CD14-positive monocyte (primary cell): ENCODE measurements at regions of chr2 and their contacts with region 1.

Region 1: GRCh38 chr2:218852911-218853667 is 6.5 kb upstream of the WNT6 start:
- DNase-seq: peak; percentile 37 to 59 (median 49)
- H3K4me3 ChIP-seq: no peak overlapping the region
- H3K4me3 Mint-ChIP-seq: peak overlapping the region in 1 of 2 donors; percentile 75
- H3K27ac ChIP-seq: no peak overlapping the region
- H3K27ac Mint-ChIP-seq: no peak overlapping the region
- H3K4me1 ChIP-seq: peaks cover 11 to 12% of the 10 kb centered on the region in 2 donors
- H3K4me1 Mint-ChIP-seq: peaks cover 17% of the 10 kb centered on the region
- H3K27me3 ChIP-seq: peaks cover 35 to 52% of the 10 kb centered on the region in 2 donors
- H3K27me3 Mint-ChIP-seq: peaks cover 54 to 78% (median 76%) of the 10 kb centered on the region in 3 donors
- CTCF ChIP-seq: peak; percentile 83

Region 2: DNA sequence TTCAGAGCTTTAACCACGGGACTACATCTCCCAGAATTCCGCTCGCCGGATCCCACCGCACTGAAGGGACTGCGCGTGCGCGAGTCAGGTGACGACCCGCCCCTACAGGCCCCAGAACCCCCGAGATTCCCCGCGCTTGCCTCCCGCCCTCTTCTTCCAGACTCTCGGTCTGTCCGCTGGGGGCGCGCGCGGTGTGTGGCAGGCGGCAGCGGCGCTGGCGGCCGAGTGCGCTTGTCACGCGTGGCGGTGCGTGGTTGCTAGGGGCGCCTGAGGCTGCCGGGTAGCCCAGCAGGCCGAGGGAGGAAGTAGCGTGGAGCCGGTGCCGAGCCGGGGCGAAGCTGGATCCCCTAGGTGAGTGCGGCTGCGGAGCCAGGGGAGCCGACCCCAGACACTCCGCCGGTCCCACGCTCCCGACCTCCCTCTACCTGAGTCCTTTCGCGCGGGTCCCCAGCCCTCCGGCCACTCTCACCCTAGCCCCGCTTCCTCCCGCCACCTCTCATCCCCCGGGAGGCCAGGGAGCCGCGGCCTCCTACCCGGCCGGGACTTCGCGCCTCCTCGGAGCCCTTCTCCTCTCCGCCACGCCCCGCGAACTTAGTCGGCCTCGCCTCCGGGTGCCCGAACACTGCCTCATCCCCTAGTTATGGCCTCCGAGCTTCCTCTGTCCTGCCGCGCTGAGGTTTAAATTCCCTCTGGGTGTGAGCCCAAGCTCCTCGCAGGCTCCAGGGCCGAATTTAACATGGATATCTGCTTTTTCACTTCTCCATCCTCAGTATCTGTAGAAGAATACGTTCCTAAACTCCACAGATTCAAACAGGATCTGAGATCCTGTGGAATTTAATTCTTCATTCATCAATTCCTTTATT is 142.2 kb before region 1 on chr2 and contains the start of gene TTLL4:
- intact Hi-C with region 1: loop called (anchors 5 kb)
- DNase-seq: peak; percentile 97 to 99 (median 98)
- H3K4me3 ChIP-seq: peak within 1 kb of the TSS; percentile 66 to 87 (median 85)
- H3K4me3 Mint-ChIP-seq: peak within 1 kb of the TSS; percentile 89 to 93
- H3K27ac ChIP-seq: peak within 1 kb of the TSS; percentile 88 to 98
- H3K27ac Mint-ChIP-seq: peak within 1 kb of the TSS; percentile 93 to 98 (median 96)
- H3K4me1 ChIP-seq: peaks cover 53 to 55% of the 10 kb centered on the region in 2 donors
- H3K4me1 Mint-ChIP-seq: peaks cover 41% of the 10 kb centered on the region
- H3K27me3 ChIP-seq: no peaks in the 10 kb centered on the region
- H3K27me3 Mint-ChIP-seq: peaks cover 0 to 7% (median 4%) of the 10 kb centered on the region in 3 donors
- CTCF ChIP-seq: peak; percentile 90
- polyA plus RNA-seq, gene TTLL4: 13.5 to 90.2 (median 16.3) TPM

Region 3: GRCh38 chr2:218727502-218728165 is 125.5 kb before region 1 on chr2:
- intact Hi-C with region 1: loop called in 1 of 2 experiments (anchors 5 kb)
- DNase-seq: peak; percentile 44 to 67 (median 61)
- H3K4me3 ChIP-seq: no peak overlapping the region
- H3K4me3 Mint-ChIP-seq: no peak overlapping the region
- H3K27ac ChIP-seq: no peak overlapping the region
- H3K27ac Mint-ChIP-seq: peak overlapping the region in 6 of 7 donors; percentile 38 to 90 (median 74)
- H3K4me1 ChIP-seq: peaks cover 43 to 46% of the 10 kb centered on the region in 2 donors
- H3K4me1 Mint-ChIP-seq: peaks cover 49% of the 10 kb centered on the region
- H3K27me3 ChIP-seq: no peaks in the 10 kb centered on the region
- H3K27me3 Mint-ChIP-seq: no peaks in the 10 kb centered on the region
- CTCF ChIP-seq: peak; percentile 80

Region 4: GRCh38 chr2:218806346-218806978 is 46.6 kb before region 1 on chr2:
- intact Hi-C with region 1: no loop called
- DNase-seq: peak; percentile 67 to 80 (median 76)
- H3K4me3 ChIP-seq: peak overlapping the region in 1 of 3 experiments; percentile 51
- H3K4me3 Mint-ChIP-seq: peak overlapping the region; percentile 67 to 76
- H3K27ac ChIP-seq: peak overlapping the region; percentile 13 to 70
- H3K27ac Mint-ChIP-seq: peak overlapping the region; percentile 72 to 93 (median 86)
- H3K4me1 ChIP-seq: peaks cover 22 to 37% of the 10 kb centered on the region in 2 donors
- H3K4me1 Mint-ChIP-seq: peaks cover 34% of the 10 kb centered on the region
- H3K27me3 ChIP-seq: peaks cover 0 to 3% of the 10 kb centered on the region in 2 donors
- H3K27me3 Mint-ChIP-seq: peaks cover 4 to 6% (median 5%) of the 10 kb centered on the region in 3 donors
- CTCF ChIP-seq: no peak

Region 5: DNA sequence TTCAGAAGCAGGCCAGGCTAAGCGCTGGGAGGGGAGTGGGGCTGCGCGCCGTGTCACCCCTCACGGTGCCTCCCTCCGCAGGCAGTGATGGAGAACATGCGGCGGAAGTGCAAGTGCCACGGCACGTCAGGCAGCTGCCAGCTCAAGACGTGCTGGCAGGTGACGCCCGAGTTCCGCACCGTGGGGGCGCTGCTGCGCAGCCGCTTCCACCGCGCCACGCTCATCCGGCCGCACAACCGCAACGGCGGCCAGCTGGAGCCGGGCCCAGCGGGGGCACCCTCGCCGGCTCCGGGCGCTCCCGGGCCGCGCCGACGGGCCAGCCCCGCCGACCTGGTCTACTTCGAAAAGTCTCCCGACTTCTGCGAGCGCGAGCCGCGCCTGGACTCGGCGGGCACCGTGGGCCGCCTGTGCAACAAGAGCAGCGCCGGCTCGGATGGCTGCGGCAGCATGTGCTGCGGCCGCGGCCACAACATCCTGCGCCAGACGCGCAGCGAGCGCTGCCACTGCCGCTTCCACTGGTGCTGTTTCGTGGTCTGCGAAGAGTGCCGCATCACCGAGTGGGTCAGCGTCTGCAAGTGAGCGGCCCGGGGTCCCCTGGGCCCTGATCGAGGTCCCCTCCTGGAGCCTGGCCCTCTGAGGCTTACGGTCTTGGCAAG is 39.7 kb after region 1 on chr2:
- intact Hi-C with region 1: loop called (anchors 2 kb)
- DNase-seq: peak; percentile 64 to 83 (median 72)
- H3K4me3 ChIP-seq: peak overlapping the region in 1 of 3 experiments; percentile 56
- H3K4me3 Mint-ChIP-seq: peak overlapping the region; percentile 57 to 86
- H3K27ac ChIP-seq: no peak overlapping the region
- H3K27ac Mint-ChIP-seq: peak overlapping the region in 2 of 7 donors; percentile 41 to 52
- H3K4me1 ChIP-seq: peaks cover 9 to 29% of the 10 kb centered on the region in 2 donors
- H3K4me1 Mint-ChIP-seq: peaks cover 19% of the 10 kb centered on the region
- H3K27me3 ChIP-seq: peaks cover 47 to 69% of the 10 kb centered on the region in 2 donors
- H3K27me3 Mint-ChIP-seq: peaks cover 69 to 88% (median 69%) of the 10 kb centered on the region in 3 donors
- CTCF ChIP-seq: peak; percentile 70

Region 6: GRCh38 chr2:218898109-218898878 is 45.2 kb after region 1 on chr2:
- intact Hi-C with region 1: loop called (anchors 2 kb)
- DNase-seq: peak; percentile 49 to 68 (median 62)
- H3K4me3 ChIP-seq: no peak overlapping the region
- H3K4me3 Mint-ChIP-seq: peak overlapping the region in 1 of 2 donors; percentile 72
- H3K27ac ChIP-seq: no peak overlapping the region
- H3K27ac Mint-ChIP-seq: no peak overlapping the region
- H3K4me1 ChIP-seq: peaks cover 2 to 21% of the 10 kb centered on the region in 2 donors
- H3K4me1 Mint-ChIP-seq: peaks cover 23% of the 10 kb centered on the region
- H3K27me3 ChIP-seq: peaks cover 79 to 89% of the 10 kb centered on the region in 2 donors
- H3K27me3 Mint-ChIP-seq: peaks cover 85 to 94% (median 88%) of the 10 kb centered on the region in 3 donors
- CTCF ChIP-seq: peak; percentile 100